MCF 10A (cell line): ENCODE measurements at regions of chr9 and their contacts with region 1.

Region 1: DNA sequence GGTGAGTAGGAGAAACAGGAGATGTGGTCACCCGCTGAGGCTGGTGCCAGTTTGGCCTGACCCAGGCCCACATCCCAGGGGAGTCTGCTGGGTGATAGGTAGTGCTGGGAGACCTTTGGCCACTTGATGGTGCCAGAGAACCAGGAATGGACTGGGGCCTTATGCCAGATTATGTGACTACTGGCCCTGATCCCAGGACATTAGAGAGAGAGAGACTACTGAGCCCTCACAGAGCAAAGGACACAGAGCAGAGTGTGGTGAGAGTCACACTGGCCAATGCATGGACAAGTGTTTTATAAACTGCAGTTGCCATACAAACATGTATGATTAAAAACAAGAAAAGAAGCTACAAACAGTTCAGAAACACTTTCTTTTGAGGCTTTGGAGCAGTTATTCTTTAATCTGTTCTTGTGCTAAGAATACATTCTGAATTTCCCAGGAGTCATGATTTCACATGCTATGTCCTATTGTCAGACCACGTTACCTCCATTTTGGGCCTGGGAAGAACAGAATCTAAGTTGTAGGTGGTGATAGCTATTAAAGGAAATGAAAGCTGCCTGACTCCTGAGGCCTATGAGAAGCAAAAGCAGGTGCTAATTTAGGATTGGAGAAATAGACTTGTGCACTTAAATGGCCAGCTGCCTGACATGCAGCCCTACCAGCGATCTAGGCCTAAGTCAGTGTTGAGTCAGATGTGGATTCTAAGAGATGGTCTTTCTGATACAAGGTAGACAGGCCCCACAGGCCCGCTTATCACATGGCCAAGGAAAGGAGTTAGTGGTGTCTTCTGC is 32.6 kb upstream of the TMOD1 start:
- DNase-seq: peak; percentile 70
- H3K4me3 Mint-ChIP-seq: no peak overlapping the region
- H3K27ac Mint-ChIP-seq: no peak overlapping the region
- H3K4me1 Mint-ChIP-seq: no peaks in the 10 kb centered on the region
- H3K27me3 Mint-ChIP-seq: no peaks in the 10 kb centered on the region
- CTCF ChIP-seq: peak; percentile 74

Region 2: GRCh38 chr9:96854073-96854876 is 614.6 kb before region 1 on chr9 and contains the start of gene ZNF782:
- CTCF ChIA-PET with region 1: interaction called, 12 read pairs
- POLR2A ChIA-PET with region 1: interaction called, 3 read pairs
- intact Hi-C with region 1: no loop called
- DNase-seq: peak; percentile 96
- H3K4me3 Mint-ChIP-seq: peak within 1 kb of the TSS; percentile 87
- H3K27ac Mint-ChIP-seq: peak within 1 kb of the TSS; percentile 94
- H3K4me1 Mint-ChIP-seq: peaks cover 25% of the 10 kb centered on the region
- H3K27me3 Mint-ChIP-seq: no peaks in the 10 kb centered on the region
- CTCF ChIP-seq: no peak
- total RNA-seq, gene ZNF782: 5.2 and 6.0 TPM in 2 replicates

Region 3: DNA sequence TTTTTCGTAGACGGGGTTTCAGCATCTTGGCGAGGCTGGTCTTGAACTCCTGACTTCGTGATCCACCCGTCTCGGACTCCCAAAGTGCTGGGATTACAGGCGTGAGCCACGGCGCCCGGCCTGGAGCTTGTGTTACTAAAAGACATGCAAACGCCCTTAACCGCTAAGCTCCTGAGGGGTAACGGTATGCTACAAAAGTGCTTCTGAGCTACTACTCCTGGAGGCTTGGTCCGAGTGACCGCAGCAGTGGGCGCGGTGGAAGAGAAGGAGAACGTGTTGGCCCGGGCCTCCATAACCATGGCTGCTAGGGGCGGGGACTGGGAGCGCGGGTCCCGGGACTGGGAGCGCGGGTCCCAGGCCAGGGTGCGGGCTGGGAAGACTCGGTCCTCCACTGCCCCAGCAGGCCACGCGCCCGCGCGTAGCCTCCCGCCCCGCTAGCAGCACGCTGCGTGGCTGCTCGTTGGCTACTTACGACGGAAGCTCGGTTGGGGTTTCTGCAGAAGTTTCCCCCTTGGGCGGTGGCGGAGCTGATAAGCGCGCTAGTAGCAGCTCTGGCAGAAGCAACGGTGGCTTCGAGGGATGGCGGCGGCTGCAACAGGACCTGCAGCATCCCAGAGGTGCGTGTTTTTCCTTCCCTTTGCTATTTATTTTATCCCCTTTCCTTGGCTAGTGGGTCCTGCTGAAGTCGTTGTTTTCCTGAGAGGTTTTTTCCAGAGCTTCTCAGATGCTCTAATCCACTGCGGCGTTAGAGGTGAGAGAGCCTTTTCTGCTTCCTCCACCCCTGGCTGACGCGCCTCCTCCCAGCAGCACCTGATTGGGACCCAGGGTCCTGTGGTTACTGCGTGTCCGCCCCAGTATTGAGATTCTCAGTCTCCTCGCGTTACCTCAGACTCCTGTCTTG is 230.7 kb before region 1 on chr9:
- CTCF ChIA-PET with region 1: no interaction called
- POLR2A ChIA-PET with region 1: no interaction called
- intact Hi-C with region 1: no loop called
- DNase-seq: peak; percentile 84
- H3K4me3 Mint-ChIP-seq: peak overlapping the region; percentile 92
- H3K27ac Mint-ChIP-seq: peak overlapping the region; percentile 91
- H3K4me1 Mint-ChIP-seq: peaks cover 12% of the 10 kb centered on the region
- H3K27me3 Mint-ChIP-seq: no peaks in the 10 kb centered on the region
- CTCF ChIP-seq: no peak

Region 4: GRCh38 chr9:97447001-97447400 is 21.9 kb before region 1 on chr9:
- CTCF ChIA-PET with region 1: interaction called, 19 read pairs
- POLR2A ChIA-PET with region 1: no interaction called
- intact Hi-C with region 1: no loop called
- DNase-seq: no peak
- H3K4me3 Mint-ChIP-seq: no peak overlapping the region
- H3K27ac Mint-ChIP-seq: no peak overlapping the region
- H3K4me1 Mint-ChIP-seq: peaks cover under 1% of the 10 kb centered on the region
- H3K27me3 Mint-ChIP-seq: no peaks in the 10 kb centered on the region
- CTCF ChIP-seq: no peak

Region 5: GRCh38 chr9:97501177-97501971 is 32.5 kb after region 1 on chr9 and contains the start of gene TMOD1:
- CTCF ChIA-PET with region 1: interaction called, 34 read pairs
- POLR2A ChIA-PET with region 1: interaction called, 3 read pairs
- intact Hi-C with region 1: no loop called
- DNase-seq: peak; percentile 60
- H3K4me3 Mint-ChIP-seq: peak within 1 kb of the TSS; percentile 63
- H3K27ac Mint-ChIP-seq: no peak within 1 kb of the TSS
- H3K4me1 Mint-ChIP-seq: no peaks in the 10 kb centered on the region
- H3K27me3 Mint-ChIP-seq: peaks cover 19% of the 10 kb centered on the region
- CTCF ChIP-seq: peak; percentile 14
- total RNA-seq, gene TMOD1: 0.26 TPM in 1 of 2 replicates, not detected in the other

Region 6: DNA sequence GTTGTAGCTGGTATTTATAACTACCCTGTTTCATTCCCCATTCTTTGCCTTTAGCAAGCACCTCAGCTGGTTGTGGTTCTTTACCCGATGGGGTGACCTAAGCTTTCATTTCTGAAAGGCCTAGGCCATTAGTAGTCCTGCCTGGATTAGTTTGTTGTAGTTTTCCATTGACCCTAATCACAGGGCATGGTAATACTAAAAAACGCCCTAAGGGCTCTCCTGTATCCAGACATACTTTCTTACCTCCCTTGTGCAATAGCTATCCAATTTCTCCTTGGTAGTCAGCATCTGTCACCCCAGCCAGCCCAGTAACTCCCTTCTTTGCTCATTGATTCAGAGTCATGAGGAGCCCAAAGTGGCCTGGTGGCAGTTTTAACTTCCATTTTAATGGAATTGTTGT is 56.6 kb after region 1 on chr9:
- CTCF ChIA-PET with region 1: interaction called, 11 read pairs
- POLR2A ChIA-PET with region 1: interaction called, 3 read pairs
- intact Hi-C with region 1: no loop called
- DNase-seq: peak; percentile 84
- H3K4me3 Mint-ChIP-seq: no peak overlapping the region
- H3K27ac Mint-ChIP-seq: peak overlapping the region; percentile 3
- H3K4me1 Mint-ChIP-seq: peaks cover 28% of the 10 kb centered on the region
- H3K27me3 Mint-ChIP-seq: no peaks in the 10 kb centered on the region
- CTCF ChIP-seq: no peak

Region 7: GRCh38 chr9:97578856-97579255 is 110.0 kb after region 1 on chr9:
- CTCF ChIA-PET with region 1: interaction called, 11 read pairs
- POLR2A ChIA-PET with region 1: no interaction called
- intact Hi-C with region 1: no loop called
- DNase-seq: no peak
- H3K4me3 Mint-ChIP-seq: no peak overlapping the region
- H3K27ac Mint-ChIP-seq: no peak overlapping the region
- H3K4me1 Mint-ChIP-seq: no peaks in the 10 kb centered on the region
- H3K27me3 Mint-ChIP-seq: peaks cover 13% of the 10 kb centered on the region
- CTCF ChIP-seq: no peak

Region 8: DNA sequence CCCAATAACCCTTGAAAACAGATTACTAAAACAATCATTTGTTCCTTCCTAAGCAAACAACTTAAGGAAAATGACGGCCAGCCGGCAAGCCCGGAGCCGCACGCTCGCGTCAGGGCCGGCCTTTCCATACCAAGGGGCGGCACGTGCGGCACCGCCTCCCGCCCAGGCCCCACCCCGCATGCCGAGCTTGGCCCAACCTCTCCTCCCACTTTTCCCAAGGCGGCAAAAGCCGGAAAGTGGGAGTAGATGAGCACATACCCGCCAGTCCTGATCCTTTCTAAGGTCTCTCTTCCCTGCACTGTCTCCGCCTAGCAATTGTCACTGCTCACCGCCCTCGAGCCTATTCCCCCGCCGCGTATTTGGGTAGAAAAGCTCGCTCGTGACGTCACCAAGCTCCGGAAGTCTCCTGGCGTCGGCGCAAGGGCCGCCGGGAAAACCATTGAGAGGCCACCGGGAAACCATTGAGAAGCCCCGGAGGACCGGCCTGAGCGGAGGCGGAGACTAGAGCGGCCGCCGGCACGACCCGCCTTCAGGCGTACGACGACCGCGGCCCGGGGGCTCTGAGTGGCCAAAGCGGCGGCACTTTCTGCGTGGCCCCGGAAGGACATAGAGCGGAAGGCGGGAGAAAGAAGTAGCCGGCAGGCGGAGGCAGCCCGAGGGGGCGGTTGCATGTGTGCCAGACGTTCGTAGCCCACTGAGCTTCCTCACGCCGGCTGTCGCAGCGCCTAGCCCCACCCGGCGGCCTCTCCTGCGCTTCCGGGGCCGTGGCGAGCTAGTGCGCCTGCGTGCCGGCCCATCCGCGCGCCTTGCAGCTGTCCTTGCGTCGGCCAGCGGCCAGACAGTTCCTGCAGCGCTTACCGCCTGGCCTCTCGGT is 164.4 kb after region 1 on chr9 and contains the starts of genes NCBP1 and TSTD2:
- CTCF ChIA-PET with region 1: interaction called, 13 read pairs
- POLR2A ChIA-PET with region 1: interaction called, 6 read pairs
- intact Hi-C with region 1: no loop called
- DNase-seq: peak; percentile 98
- H3K4me3 Mint-ChIP-seq: peak within 1 kb of the TSS; percentile 83
- H3K27ac Mint-ChIP-seq: peak within 1 kb of the TSS; percentile 99
- H3K4me1 Mint-ChIP-seq: peaks cover 34% of the 10 kb centered on the region
- H3K27me3 Mint-ChIP-seq: no peaks in the 10 kb centered on the region
- CTCF ChIP-seq: no peak
- total RNA-seq, gene NCBP1: 35.6 and 38.7 TPM in 2 replicates
- total RNA-seq, gene TSTD2: 18.0 and 19.0 TPM in 2 replicates